OCI-LY7 (cell line): ENCODE measurements at regions of chr3 and their contacts with region 1.

Region 1: DNA sequence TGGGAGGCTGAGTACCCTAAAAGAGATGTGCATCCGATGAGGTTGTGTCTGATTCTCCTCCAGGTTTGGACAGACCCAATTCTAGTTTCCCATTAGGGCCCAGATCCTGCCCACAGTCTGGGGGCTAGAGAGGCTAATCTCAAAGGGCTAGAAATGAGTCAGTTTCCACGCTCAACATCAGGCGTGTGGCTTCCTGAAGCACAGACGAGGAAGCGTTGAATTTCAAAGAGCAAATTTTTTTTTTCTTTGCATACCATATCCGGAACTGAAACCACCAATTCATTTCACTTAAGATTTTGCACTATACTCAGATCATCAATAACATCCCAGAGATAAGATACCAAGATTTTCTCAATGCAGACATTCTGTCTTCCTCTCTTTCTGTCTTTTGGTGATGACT is 173.8 kb upstream of the BCL6 start:
- DNase-seq: peak; percentile 93
- H3K4me3 ChIP-seq: peak overlapping the region; percentile 55
- H3K27ac ChIP-seq: peak overlapping the region; percentile 97
- H3K4me1 ChIP-seq: peaks cover 99% of the 10 kb centered on the region
- CTCF ChIP-seq: no peak

Region 2: GRCh38 chr3:187929112-187929816 is 10.2 kb after region 1 on chr3:
- CTCF ChIA-PET with region 1: interaction called, 9 read pairs
- POLR2A ChIA-PET with region 1: interaction called, 331 read pairs
- intact Hi-C with region 1: no loop called
- DNase-seq: no peak
- H3K4me3 ChIP-seq: no peak overlapping the region
- H3K27ac ChIP-seq: peak overlapping the region; percentile 4
- H3K4me1 ChIP-seq: peaks cover 89% of the 10 kb centered on the region
- CTCF ChIP-seq: no peak

Region 3: GRCh38 chr3:187935623-187936156 is 16.6 kb after region 1 on chr3:
- CTCF ChIA-PET with region 1: interaction called, 10 read pairs
- POLR2A ChIA-PET with region 1: interaction called, 331 read pairs
- intact Hi-C with region 1: loop called (anchors 1 kb)
- DNase-seq: peak; percentile 91
- H3K4me3 ChIP-seq: peak overlapping the region; percentile 25
- H3K27ac ChIP-seq: peak overlapping the region; percentile 99
- H3K4me1 ChIP-seq: peaks cover 100% of the 10 kb centered on the region
- CTCF ChIP-seq: no peak

Region 4: GRCh38 chr3:187955076-187955952 is 36.3 kb after region 1 on chr3:
- CTCF ChIA-PET with region 1: no interaction called
- POLR2A ChIA-PET with region 1: interaction called, 12 read pairs
- intact Hi-C with region 1: no loop called
- DNase-seq: no peak
- H3K4me3 ChIP-seq: no peak overlapping the region
- H3K27ac ChIP-seq: peak overlapping the region; percentile 99
- H3K4me1 ChIP-seq: peaks cover 100% of the 10 kb centered on the region
- CTCF ChIP-seq: 0 out of 2 replicates have a peak, but pooled peaks have one; percentile 21

Region 5: GRCh38 chr3:187963677-187964385 is 44.8 kb after region 1 on chr3:
- CTCF ChIA-PET with region 1: no interaction called
- POLR2A ChIA-PET with region 1: interaction called, 46 read pairs
- intact Hi-C with region 1: no loop called
- DNase-seq: peak; percentile 48
- H3K4me3 ChIP-seq: peak overlapping the region; percentile 1
- H3K27ac ChIP-seq: peak overlapping the region; percentile 99
- H3K4me1 ChIP-seq: peaks cover 100% of the 10 kb centered on the region
- CTCF ChIP-seq: no peak

Region 6: GRCh38 chr3:188021502-188022040 is 102.5 kb after region 1 on chr3:
- CTCF ChIA-PET with region 1: no interaction called
- POLR2A ChIA-PET with region 1: no interaction called
- intact Hi-C with region 1: no loop called
- DNase-seq: no peak
- H3K4me3 ChIP-seq: no peak overlapping the region
- H3K27ac ChIP-seq: no peak overlapping the region
- H3K4me1 ChIP-seq: peaks cover 5% of the 10 kb centered on the region
- CTCF ChIP-seq: no peak